Breast epithelium (tissue), 4 donors: ENCODE measurements at regions of chr6 and their contacts with region 1.

Region 1: DNA sequence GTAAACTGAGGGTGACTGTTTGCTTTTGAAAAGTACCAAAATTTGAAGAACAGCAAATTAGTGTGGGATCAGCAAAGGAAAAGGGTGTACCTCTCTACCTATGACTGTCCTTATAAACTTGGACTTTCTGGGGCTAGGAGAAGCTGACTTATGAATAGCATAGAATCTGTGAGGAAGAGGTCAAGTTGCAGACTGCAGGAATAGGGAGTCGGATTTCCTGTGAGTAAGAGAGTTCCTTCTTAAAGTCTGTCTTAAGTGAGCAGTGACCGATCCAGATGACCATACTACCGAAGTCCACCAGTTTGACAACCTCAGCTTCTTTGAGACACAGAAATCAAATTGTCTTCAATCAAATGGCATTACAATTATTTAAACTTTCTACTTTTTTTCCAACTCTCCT is 708.7 kb downstream of the UTRN start:
- DNase-seq: no peak
- H3K4me3 ChIP-seq: no peak overlapping the region
- H3K27ac ChIP-seq: no peak overlapping the region
- H3K4me1 ChIP-seq: no peaks in the 10 kb centered on the region
- H3K27me3 ChIP-seq: no peaks in the 10 kb centered on the region
- CTCF ChIP-seq: no peak
- POLR2A ChIP-seq: no peak

Region 2: GRCh38 chr6:144696610-144697368 is 297.1 kb before region 1 on chr6:
- intact Hi-C with region 1: no loop called
- DNase-seq: no peak
- H3K4me3 ChIP-seq: no peak overlapping the region
- H3K27ac ChIP-seq: peak overlapping the region in 1 of 2 donors; percentile 17
- H3K4me1 ChIP-seq: no peaks in the 10 kb centered on the region
- H3K27me3 ChIP-seq: no peaks in the 10 kb centered on the region
- CTCF ChIP-seq: no peak
- POLR2A ChIP-seq: no peak

Region 3: DNA sequence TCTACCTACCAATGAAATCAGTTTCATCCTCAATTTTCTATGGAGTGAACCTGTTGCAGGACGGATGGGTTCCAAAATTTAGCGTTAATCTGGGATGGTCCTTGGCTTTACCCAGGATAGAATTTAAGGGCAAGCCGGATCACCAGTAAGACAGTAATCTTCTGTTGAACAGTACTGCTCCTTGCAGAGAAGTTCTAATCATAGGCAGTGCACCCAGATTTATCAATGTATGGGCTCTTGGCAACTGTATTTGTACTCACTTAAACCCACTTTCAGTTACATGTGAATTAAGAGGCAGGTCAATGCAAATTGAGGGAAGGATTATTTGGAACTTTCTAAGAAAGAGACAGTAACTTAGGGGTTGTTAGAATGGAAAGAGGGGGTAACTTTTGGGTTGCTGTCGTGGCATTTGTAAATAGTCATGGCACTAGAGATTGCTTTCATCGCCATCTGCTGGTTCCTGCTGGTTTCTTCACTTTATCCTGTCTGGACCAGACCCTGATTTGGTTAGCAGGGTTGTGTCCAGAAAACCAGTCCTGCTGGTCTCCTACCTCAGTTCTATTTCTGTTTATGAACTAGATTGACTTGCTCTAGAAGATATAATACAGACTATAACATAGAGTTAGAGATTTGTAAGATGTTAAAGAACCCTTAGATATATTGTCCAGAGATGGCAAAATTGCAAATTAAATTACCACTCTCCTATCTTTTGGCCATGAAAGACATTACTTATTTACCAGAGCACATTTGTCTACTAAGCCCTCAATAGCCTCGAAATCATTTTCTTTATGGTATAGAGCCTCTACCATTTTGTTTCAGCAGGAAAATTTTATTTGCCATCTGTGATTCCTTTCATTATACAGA is 62.5 kb before region 1 on chr6:
- intact Hi-C with region 1: no loop called
- DNase-seq: peak in 1 of 2 donors; percentile 18
- H3K4me3 ChIP-seq: no peak overlapping the region
- H3K27ac ChIP-seq: no peak overlapping the region
- H3K4me1 ChIP-seq: no peaks in the 10 kb centered on the region
- H3K27me3 ChIP-seq: no peaks in the 10 kb centered on the region
- CTCF ChIP-seq: peak in 2 of 3 donors; percentile 46 to 51
- POLR2A ChIP-seq: no peak

Region 4: DNA sequence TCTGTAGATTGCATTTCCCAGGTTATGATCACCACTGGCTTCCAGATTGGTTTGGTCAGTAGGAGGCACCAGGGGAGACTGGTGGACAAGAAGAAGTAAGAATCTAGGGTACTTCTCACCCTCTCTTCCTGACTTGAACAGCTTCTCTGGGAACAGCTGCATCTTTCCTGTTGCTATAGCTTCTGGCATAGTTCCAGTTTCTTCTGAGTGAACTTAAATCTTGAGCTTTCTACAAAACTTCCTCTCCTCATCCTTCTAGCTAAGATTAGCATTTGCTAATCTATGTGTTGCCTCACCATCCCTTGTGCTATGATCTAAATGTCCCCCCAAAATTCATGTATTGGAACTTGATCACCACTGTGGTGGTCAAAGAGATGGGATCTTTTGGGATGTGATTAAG is 15.8 kb after region 1 on chr6:
- intact Hi-C with region 1: loop called (anchors 1 kb)
- DNase-seq: no peak
- H3K4me3 ChIP-seq: no peak overlapping the region
- H3K27ac ChIP-seq: no peak overlapping the region
- H3K4me1 ChIP-seq: no peaks in the 10 kb centered on the region
- H3K27me3 ChIP-seq: no peaks in the 10 kb centered on the region
- CTCF ChIP-seq: no peak
- POLR2A ChIP-seq: no peak